Left cardiac atrium (tissue), 4 donors: ENCODE measurements at regions of chr7 and their contacts with region 1.

Region 1: DNA sequence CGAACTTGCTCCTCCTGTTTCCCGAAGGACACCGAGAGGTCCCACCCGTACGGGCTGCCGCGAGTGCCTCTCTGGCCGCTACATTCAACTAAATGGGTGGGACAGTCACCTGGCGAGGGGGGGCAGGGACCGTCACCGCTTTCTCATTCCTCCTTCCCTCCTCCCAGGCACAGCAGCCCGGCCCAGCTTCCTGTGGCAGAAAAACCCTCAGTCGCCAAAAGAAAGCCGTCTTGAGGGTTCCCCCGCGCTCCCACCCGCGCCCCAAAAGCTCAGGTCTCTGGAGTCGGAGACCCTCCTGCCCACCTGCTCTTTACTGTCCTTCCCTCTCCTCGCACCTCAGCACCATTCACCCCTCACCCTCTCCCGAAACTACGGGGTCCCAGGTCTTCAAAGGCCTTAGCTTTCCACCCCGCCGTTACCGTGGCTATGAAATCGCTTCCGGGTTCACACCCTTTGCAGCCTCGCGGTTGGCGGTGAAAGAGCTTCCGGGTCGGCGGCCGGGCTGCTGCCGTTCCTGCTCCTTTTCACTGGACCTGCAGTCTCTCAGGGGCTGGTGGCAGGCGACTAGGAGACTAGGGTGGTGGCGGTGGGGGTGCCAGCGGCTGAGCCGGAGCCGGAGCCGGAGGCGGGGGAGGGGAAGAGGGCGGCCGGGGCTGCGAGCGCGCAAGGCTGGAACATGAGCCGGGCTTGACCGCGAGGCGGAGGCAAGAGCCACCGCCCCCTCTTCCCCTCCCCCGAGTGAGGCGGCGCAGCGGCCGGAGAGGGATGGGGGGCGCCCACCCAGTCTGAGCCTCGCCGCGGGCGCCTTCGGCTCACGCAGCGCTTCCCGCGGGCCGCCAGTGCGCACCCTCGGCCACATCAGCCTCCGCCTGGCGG is at the starts of genes ANKIB1 and KRIT1:
- DNase-seq: peak; percentile 91
- ATAC-seq: peak; percentile 94 to 97
- total RNA-seq, gene ANKIB1: 44.7 to 53.8 TPM
- total RNA-seq, gene KRIT1: 22.1 to 31.6 TPM

Region 2: DNA sequence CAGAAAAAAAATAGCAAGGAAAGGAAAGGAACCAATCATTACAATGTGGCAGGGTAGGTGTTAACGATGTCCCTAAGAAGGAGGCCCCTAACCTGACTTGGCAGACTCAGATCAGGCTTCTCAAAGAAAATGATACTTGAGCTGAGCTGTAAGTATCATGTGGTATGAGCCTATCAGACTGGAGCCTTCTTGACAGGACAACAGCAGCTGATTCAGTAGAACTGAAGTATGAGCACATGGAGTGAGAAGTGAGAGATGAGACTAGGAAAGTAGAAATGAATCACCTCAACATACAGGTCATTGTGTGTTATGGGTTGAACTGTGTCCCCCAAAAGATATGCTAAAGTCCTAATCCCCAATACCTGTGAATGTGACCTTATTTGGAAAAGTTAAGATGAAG is 431.5 kb before region 1 on chr7:
- intact Hi-C with region 1: no loop called
- DNase-seq: no peak
- ATAC-seq: no peak

Region 3: GRCh38 chr7:91913612-91914011 is 332.1 kb before region 1 on chr7:
- intact Hi-C with region 1: no loop called
- DNase-seq: no peak
- ATAC-seq: peak; percentile 19 to 95

Region 4: GRCh38 chr7:92343719-92344118 is 98.0 kb after region 1 on chr7:
- intact Hi-C with region 1: loop called in 1 of 2 experiments (anchors 10 kb)
- DNase-seq: no peak
- ATAC-seq: no peak